Mammary epithelial cell (primary cell): ENCODE measurements at regions of chr3 and their contacts with region 1.

Region 1: GRCh38 chr3:32973982-32974381 is 22.5 kb downstream of the CCR4 start:
- DNase-seq: no peak
- H3K4me3 ChIP-seq: no peak overlapping the region
- H3K27ac ChIP-seq: no peak overlapping the region
- H3K4me1 ChIP-seq: no peaks in the 10 kb centered on the region
- H3K27me3 ChIP-seq: no peaks in the 10 kb centered on the region
- CTCF ChIP-seq: no peak

Region 2: GRCh38 chr3:32992322-32992692 is 18.3 kb after region 1 on chr3:
- CTCF ChIA-PET with region 1: no interaction called
- dilution Hi-C with region 1: no loop called
- in situ Hi-C with region 1: no loop called
- intact Hi-C with region 1: loop called (anchors 1 kb)
- DNase-seq: no peak
- H3K4me3 ChIP-seq: no peak overlapping the region
- H3K27ac ChIP-seq: no peak overlapping the region
- H3K4me1 ChIP-seq: peaks cover 10% of the 10 kb centered on the region
- H3K27me3 ChIP-seq: no peaks in the 10 kb centered on the region
- CTCF ChIP-seq: no peak

Region 3: DNA sequence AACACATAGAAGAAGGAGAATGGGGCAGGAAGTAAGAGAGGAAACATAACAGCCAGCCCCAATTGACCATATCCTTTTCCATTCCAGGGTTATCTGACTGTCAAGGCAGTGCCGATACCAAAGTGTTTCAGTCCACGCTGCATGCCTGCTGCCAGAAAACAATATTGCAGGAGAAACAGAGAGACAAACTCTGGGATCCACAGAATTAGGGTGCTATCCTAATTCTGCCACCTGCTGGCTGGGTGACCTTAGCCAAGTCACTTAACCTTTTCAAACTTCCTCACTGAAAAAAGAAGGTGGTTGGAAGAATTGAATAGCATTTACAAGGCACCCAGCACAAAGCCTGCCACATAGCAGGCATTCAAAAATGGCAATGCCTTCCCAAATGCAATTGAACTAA is 90.9 kb after region 1 on chr3:
- CTCF ChIA-PET with region 1: no interaction called
- dilution Hi-C with region 1: loop called (anchors 5 kb)
- in situ Hi-C with region 1: no loop called
- intact Hi-C with region 1: no loop called
- DNase-seq: no peak
- H3K4me3 ChIP-seq: no peak overlapping the region
- H3K27ac ChIP-seq: no peak overlapping the region
- H3K4me1 ChIP-seq: no peaks in the 10 kb centered on the region
- H3K27me3 ChIP-seq: no peaks in the 10 kb centered on the region
- CTCF ChIP-seq: peak in 1 of 2 donors; percentile 36

Region 4: DNA sequence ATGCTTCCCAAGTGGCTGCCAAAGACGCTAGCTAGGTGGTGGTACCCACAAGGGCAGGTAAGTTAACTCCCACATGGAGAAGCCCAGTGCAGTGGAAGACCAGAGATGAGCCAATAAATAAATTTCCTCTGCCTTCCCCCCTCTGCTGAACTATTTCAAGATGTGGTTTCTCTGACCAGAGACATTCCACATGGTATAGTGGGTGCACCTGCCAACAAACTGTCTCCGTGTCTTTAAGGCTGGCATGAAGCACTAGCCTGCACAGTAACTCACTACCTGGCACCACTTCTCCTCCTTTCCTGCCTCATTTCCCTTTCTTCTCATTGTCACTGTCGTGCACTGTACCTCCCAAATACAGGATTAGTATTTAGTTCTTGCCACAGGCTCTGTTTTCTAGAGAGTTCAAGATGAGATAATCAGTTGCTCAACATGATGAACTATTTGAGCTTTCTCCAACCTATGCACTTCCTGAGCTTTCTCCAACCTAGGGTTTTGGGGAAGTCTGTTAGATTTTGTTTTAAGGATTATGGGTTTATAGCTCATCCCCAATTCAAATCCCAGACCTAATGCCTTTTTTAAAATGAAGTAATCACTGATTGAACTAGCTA is 131.5 kb after region 1 on chr3:
- CTCF ChIA-PET with region 1: no interaction called
- dilution Hi-C with region 1: no loop called
- in situ Hi-C with region 1: no loop called
- intact Hi-C with region 1: no loop called
- DNase-seq: no peak
- H3K4me3 ChIP-seq: no peak overlapping the region
- H3K27ac ChIP-seq: no peak overlapping the region
- H3K4me1 ChIP-seq: no peaks in the 10 kb centered on the region
- H3K27me3 ChIP-seq: no peaks in the 10 kb centered on the region
- CTCF ChIP-seq: no peak